Activated T-helper 1 cell treated with anti-CD3 and anti-CD28 coated beads, Interleukin-12 subunit alpha, Interleukin-12 subunit beta, Interleukin-2, Interleukin-4 antibody, amounts not matched to agents 30 ng/mL and 10 ng/mL and 1 ng/mL, durations not matched to agents 14 hours and 24 hours and 36 hours (primary cell): ENCODE measurements at regions of chr20 and their contacts with region 1.

Region 1: GRCh38 chr20:49803418-49803817 is 9.2 kb upstream of the SLC9A8 start:
- DNase-seq: no peak
- H3K4me3 Mint-ChIP-seq: no peak overlapping the region
- H3K27ac Mint-ChIP-seq: peak overlapping the region; percentile 52
- H3K4me1 Mint-ChIP-seq: peaks cover 67% of the 10 kb centered on the region
- H3K27me3 Mint-ChIP-seq: peaks cover 3% of the 10 kb centered on the region

Region 2: GRCh38 chr20:49677777-49678758 is 125.3 kb before region 1 on chr20:
- intact Hi-C with region 1: loop called (anchors 2 kb)
- DNase-seq: no peak
- H3K4me3 Mint-ChIP-seq: peak overlapping the region; percentile 15
- H3K27ac Mint-ChIP-seq: peak overlapping the region; percentile 76
- H3K4me1 Mint-ChIP-seq: peaks cover 85% of the 10 kb centered on the region
- H3K27me3 Mint-ChIP-seq: no peaks in the 10 kb centered on the region